ENCODE measurements at regions of chr7 and their contacts with region 1.

Region 1: GRCh38 chr7:97104719-97105238 is 12.7 kb upstream of the SDHAF3 start:
- DNase-seq: peak; percentile 73 to 92 (median 89)
- ATAC-seq: peak; percentile 84 to 99 (median 98)
- H3K4me3 ChIP-seq: no peak overlapping the region
- H3K27ac ChIP-seq: no peak overlapping the region
- H3K4me1 ChIP-seq: no peaks in the 10 kb centered on the region
- H3K27me3 ChIP-seq: no peaks in the 10 kb centered on the region
- CTCF ChIP-seq: peak; percentile 34 to 72 (median 62)

Region 2: GRCh38 chr7:97179454-97180104 is 74.8 kb after region 1 on chr7:
- intact Hi-C with region 1: loop called in 1 of 3 experiments (anchors 10 kb)
- DNase-seq: peak in 3 of 6 donors; percentile 18 to 46 (median 26)
- ATAC-seq: peak; percentile 48 to 86 (median 82)
- H3K4me3 ChIP-seq: no peak overlapping the region
- H3K27ac ChIP-seq: no peak overlapping the region
- H3K4me1 ChIP-seq: no peaks in the 10 kb centered on the region
- H3K27me3 ChIP-seq: no peaks in the 10 kb centered on the region
- CTCF ChIP-seq: peak; percentile 45 to 76 (median 58)

Region 3: DNA sequence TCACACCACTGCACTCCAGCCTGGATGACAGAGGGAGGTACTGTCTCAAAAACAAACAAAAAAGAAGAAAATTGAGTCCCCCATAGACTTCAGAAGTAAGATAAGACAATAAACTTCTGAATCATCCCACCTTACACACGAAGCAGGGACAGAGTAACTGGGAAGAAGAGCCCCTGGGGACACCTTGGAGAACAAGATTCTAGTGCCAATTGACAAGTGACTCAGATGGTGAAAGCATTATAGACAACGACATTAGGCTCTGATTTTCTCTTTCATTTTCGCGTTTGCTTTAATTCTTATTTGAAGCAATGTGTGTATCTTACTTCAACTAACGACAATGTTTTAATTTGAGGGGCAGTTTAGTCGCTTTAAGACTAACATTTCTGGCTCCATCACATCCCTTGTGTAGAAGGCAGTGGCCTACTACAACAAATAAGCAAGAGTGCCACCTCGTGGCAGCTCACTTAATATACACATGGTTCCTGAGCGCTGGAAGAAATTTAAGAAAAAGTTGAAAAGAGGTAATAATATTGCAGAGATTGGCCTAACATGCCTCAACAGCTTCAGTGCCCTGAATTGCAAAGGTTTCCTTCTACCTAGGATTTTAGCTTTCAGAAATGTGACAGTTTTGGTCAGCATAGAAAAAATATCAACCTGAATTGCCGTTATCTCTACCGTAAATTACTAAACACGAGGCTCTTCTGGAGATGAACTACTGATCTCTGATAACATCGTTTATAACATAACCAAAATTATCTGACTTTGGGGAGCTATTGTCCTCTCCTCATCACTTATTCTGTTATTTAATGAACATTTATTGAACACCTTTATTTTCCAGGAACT is 730.7 kb after region 1 on chr7:
- intact Hi-C with region 1: loop called in 1 of 3 experiments (anchors 10 kb)
- DNase-seq: peak in 5 of 6 donors; percentile 22 to 85 (median 55)
- ATAC-seq: peak in 3 of 4 donors; percentile 86 to 88 (median 86)
- H3K4me3 ChIP-seq: no peak overlapping the region
- H3K27ac ChIP-seq: no peak overlapping the region
- H3K4me1 ChIP-seq: no peaks in the 10 kb centered on the region
- H3K27me3 ChIP-seq: no peaks in the 10 kb centered on the region
- CTCF ChIP-seq: peak; percentile 30 to 71 (median 55)

Region 4: GRCh38 chr7:98149116-98149692 is 1044.4 kb after region 1 on chr7:
- intact Hi-C with region 1: no loop called
- DNase-seq: no peak
- ATAC-seq: no peak
- H3K4me3 ChIP-seq: no peak overlapping the region
- H3K27ac ChIP-seq: no peak overlapping the region
- H3K4me1 ChIP-seq: no peaks in the 10 kb centered on the region
- H3K27me3 ChIP-seq: no peaks in the 10 kb centered on the region
- CTCF ChIP-seq: no peak

Measured in pancreas (tissue), 10 donors.